ENCODE measurements at regions of chr4 and their contacts with region 1.

Region 1: DNA sequence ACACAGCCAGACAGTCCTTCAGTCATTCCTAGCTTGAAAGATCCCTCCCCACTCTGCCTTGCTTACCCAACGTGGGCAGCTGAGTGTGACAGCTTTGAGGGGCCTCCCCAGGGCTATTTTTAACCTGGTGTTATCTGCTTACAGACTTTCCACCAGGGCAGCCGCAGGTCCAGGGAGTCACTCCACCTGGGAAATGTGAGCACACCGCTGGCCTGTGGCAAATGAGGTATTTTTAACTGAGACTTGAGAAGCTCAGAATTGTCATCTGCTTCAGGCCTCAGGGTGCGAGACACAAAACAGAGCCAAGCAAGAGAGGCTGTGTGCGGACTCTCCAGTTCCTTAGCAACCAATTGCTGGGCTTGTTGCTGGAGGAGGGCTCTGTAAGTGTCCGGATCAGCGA is 13.0 kb downstream of the CORIN start:
- DNase-seq: no peak
- ATAC-seq: peak in 2 of 4 donors; percentile 26 to 51
- H3K4me3 ChIP-seq: no peak overlapping the region
- H3K27ac ChIP-seq: no peak overlapping the region
- H3K4me1 ChIP-seq: no peaks in the 10 kb centered on the region
- H3K27me3 ChIP-seq: no peaks in the 10 kb centered on the region
- CTCF ChIP-seq: no peak

Region 2: GRCh38 chr4:47442980-47443379 is 381.9 kb before region 1 on chr4:
- intact Hi-C with region 1: no loop called
- DNase-seq: peak in 1 of 6 donors; percentile 17
- ATAC-seq: peak in 1 of 4 donors; percentile 70
- H3K4me3 ChIP-seq: no peak overlapping the region
- H3K27ac ChIP-seq: no peak overlapping the region
- H3K4me1 ChIP-seq: no peaks in the 10 kb centered on the region
- H3K27me3 ChIP-seq: no peaks in the 10 kb centered on the region
- CTCF ChIP-seq: no peak

Region 3: DNA sequence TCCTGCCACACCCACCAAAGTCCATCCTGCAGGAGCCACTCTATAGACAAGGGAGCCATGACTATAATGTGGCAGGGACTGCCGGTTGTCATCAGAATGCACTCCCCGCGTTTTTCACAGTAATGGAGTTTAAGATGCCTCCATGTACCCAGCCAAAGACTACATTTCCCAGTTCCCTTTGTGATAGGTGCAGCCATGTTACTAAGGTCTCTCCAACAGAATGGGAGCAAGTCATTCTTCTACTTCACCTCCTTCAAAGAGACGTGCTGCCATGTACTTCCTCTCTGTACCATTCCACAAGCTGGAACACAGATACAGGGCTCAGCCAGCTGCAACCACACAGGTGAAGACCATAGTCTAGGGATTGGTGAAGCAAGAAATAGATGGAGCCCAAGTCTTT is 113.7 kb before region 1 on chr4:
- intact Hi-C with region 1: loop called in 2 of 3 experiments (anchors 1 to 10 kb)
- DNase-seq: no peak
- ATAC-seq: no peak
- H3K4me3 ChIP-seq: no peak overlapping the region
- H3K27ac ChIP-seq: no peak overlapping the region
- H3K4me1 ChIP-seq: peaks cover 0 to 4% (median 0%) of the 10 kb centered on the region in 3 donors
- H3K27me3 ChIP-seq: no peaks in the 10 kb centered on the region
- CTCF ChIP-seq: no peak

Region 4: GRCh38 chr4:48153791-48154550 is 329.1 kb after region 1 on chr4:
- intact Hi-C with region 1: no loop called
- DNase-seq: no peak
- ATAC-seq: no peak
- H3K4me3 ChIP-seq: no peak overlapping the region
- H3K27ac ChIP-seq: no peak overlapping the region
- H3K4me1 ChIP-seq: no peaks in the 10 kb centered on the region
- H3K27me3 ChIP-seq: no peaks in the 10 kb centered on the region
- CTCF ChIP-seq: no peak

Measured in pancreas (tissue), 10 donors.